ENCODE measurements at regions of chr5 and their contacts with region 1.

Region 1: GRCh38 chr5:159209438-159210305 is at the start of gene RNF145:
- DNase-seq: peak; percentile 92
- H3K4me3 ChIP-seq: peak within 1 kb of the TSS; percentile 85 to 99 (median 89)
- H3K27ac ChIP-seq: peak within 1 kb of the TSS; percentile 95 to 97 (median 96)
- H3K4me1 ChIP-seq: peaks cover 0 to 37% (median 31%) of the 10 kb centered on the region in 4 donors
- H3K27me3 ChIP-seq: no peaks in the 10 kb centered on the region
- CTCF ChIP-seq: no peak
- EP300 ChIP-seq: no peak
- POLR2A ChIP-seq: no peak
- total RNA-seq, gene RNF145: 30.4 to 54.2 (median 39.5) TPM

Region 2: DNA sequence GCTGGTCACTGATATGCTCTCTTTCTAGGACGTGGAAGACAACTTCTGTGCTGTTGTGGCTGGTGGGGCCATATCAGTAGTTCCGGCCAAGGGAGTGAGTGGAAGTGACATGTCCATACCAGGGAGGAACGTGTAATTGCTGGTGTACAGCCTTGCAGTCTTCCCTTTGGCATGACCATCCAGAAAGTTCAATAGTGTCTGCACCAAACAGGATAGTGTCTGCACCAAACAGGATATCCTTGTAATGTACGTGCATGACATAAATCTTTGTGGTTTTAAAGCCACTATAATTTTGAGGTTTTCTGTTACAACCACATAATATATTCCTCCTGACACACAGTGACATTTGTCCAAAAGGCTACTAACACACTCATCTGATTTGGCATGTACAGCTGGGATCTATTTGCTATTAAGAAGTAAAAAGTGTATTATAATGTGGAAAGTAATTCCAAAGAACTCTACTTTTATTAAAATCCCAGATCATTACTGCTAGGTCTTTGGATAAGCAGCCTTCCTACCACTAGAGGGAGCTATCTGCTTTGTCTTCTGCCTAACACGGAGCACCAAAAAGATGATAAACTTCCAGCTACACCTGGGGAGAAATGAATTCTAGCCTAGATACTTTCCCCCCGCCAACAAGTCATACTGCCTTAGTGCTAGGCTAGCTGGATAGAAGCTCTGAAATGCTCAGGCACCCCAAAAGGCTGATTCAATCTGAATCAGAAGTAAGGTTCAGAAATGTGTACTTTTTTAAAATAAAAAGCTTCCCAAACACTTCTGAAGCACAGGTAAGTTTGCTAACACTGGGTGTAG is 53.0 kb before region 1 on chr5:
- intact Hi-C with region 1: loop called (anchors 2 kb)
- DNase-seq: no peak
- H3K4me3 ChIP-seq: no peak overlapping the region
- H3K27ac ChIP-seq: no peak overlapping the region
- H3K4me1 ChIP-seq: no peaks in the 10 kb centered on the region
- H3K27me3 ChIP-seq: no peaks in the 10 kb centered on the region
- CTCF ChIP-seq: peak; percentile 37 to 82 (median 70)
- EP300 ChIP-seq: no peak
- POLR2A ChIP-seq: no peak

Region 3: DNA sequence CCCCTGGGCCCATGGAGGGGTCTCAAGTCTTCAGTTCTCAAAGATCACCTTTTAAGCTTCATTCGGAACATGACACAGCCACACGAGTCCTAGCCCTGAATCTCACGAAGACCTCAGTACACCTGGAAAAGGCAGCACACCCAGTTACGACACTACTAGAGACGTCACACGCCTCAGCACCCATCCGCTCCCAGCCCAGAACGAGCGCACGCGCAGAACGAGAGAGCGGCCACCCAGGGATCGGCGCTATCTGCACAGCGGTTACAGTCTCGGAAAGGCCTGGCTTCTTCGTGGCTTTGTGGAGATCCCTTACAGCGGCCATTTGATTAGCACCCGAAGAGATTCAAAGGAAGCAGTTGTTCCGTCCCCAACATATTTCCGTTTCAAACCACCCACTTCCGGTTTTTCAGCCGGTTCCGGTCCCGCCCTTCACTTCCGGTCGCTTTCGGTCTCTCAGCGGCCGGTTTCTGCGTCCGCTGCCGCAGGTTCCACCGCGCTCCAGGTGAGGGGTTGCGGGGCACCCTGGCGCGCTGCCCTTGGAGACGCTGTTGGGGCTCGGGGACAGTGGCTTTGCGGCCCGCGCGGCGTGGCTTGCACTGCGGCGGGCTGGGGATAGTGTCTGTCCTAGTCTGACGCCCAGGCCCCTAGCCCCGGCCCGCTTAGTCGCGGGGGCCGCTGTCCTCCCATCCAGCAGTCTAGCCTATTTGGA is 53.3 kb after region 1 on chr5 and contains the start of gene UBLCP1:
- intact Hi-C with region 1: loop called (anchors 1 kb)
- DNase-seq: peak; percentile 89
- H3K4me3 ChIP-seq: peak within 1 kb of the TSS; percentile 76 to 94 (median 92)
- H3K27ac ChIP-seq: peak within 1 kb of the TSS; percentile 87 to 89 (median 88)
- H3K4me1 ChIP-seq: peaks cover 0 to 21% (median 15%) of the 10 kb centered on the region in 4 donors
- H3K27me3 ChIP-seq: no peaks in the 10 kb centered on the region
- CTCF ChIP-seq: no peak
- EP300 ChIP-seq: peak in 2 of 4 donors; percentile 11 to 25
- POLR2A ChIP-seq: peak in 1 of 2 donors; percentile 34
- total RNA-seq, gene UBLCP1: 17.7 to 29.6 (median 19.8) TPM

Region 4: DNA sequence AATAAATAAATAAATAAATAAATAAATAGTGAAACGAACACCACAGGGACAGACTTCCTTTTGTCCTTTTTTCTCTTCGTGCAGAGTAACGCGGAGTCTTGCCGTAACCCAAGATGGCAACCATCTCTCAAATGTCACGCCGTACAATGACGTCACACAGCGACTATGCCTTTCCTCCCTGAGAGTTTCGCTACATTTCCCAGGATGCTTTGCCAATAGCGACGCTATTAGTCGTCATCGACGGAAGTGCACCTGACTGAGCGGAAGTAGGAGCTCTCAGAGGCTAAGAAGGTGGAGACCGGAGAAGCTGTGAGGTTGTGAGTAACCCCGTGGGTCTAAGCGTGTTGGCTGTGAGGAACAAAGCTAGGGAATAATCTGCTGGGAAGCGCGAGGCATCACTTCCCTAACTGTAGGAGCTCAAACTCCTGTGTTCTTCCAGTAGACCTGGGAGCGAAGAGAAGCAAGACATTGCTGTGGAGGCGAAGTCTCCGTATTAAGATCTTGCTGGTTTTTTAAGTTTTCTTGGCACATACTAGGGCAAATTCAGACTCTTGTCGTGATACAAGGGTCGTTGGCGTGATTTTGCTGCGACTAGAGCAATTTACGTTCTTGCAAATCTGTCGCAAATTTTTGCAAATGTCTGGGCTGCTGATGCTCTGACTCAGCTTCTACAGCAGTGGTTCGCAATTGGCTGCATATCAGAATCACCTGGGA is 799.4 kb after region 1 on chr5 and contains the start of gene TTC1:
- intact Hi-C with region 1: loop called (anchors 5 kb)
- DNase-seq: peak; percentile 98
- H3K4me3 ChIP-seq: peak within 1 kb of the TSS; percentile 66 to 90 (median 80)
- H3K27ac ChIP-seq: peak within 1 kb of the TSS; percentile 85 to 91 (median 86)
- H3K4me1 ChIP-seq: peaks cover 0 to 20% (median 17%) of the 10 kb centered on the region in 4 donors
- H3K27me3 ChIP-seq: no peaks in the 10 kb centered on the region
- CTCF ChIP-seq: no peak
- EP300 ChIP-seq: peak in 2 of 4 donors; percentile 25 to 71
- POLR2A ChIP-seq: peak; percentile 73 to 85
- total RNA-seq, gene TTC1: 38.3 to 65.0 (median 50.9) TPM